Activated naive CD4-positive, alpha-beta T cell treated with anti-CD3 and anti-CD28 coated beads for 36 hours (primary cell): ENCODE measurements at regions of chr1 and their contacts with region 1.

Region 1: DNA sequence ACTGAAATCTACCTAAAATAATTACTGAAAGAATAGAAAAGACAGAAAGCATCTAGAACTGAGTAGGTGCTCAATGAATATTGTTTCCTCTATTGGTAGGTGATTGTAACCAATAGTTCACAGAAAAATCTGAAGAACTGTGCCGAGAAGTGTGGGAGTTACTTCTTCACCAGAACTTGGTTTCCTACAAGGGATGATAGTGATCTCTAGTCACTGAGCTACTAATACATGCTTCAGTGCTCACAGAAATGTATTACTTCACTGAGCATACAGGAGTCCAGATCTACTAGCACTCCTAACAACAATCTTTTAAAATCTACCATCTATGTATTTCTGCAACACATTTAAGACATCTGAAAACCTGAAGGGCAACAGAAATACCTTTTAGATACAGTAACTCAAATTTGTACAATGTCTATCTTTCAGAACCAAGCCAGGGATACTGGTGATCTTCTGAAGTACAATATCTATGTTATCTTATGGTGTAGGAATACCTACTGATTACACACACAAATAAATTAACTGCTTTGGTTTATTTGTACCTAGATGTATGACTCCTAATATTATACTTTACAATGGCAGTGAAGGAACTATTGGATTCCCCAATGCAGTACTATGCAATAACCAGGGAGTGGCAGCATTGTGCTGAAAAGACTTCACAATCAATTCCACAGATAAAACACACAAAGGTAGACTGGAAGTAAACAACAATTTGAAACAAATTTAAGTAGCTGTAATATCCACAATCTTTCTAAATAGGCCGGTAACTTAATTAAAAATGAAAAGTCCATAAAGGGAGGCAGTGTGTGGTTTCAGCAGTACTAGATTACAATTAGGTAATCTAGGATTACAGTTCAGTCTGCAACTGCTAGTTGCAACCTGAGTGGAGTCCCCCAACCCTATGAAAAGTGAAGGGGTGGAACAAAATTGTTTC is 243.0 kb downstream of the SLC45A1 start:
- DNase-seq: peak; percentile 53
- H3K4me3 Mint-ChIP-seq: no peak overlapping the region
- H3K27ac Mint-ChIP-seq: no peak overlapping the region
- H3K4me1 Mint-ChIP-seq: peaks cover 26% of the 10 kb centered on the region
- H3K27me3 Mint-ChIP-seq: no peaks in the 10 kb centered on the region

Region 2: DNA sequence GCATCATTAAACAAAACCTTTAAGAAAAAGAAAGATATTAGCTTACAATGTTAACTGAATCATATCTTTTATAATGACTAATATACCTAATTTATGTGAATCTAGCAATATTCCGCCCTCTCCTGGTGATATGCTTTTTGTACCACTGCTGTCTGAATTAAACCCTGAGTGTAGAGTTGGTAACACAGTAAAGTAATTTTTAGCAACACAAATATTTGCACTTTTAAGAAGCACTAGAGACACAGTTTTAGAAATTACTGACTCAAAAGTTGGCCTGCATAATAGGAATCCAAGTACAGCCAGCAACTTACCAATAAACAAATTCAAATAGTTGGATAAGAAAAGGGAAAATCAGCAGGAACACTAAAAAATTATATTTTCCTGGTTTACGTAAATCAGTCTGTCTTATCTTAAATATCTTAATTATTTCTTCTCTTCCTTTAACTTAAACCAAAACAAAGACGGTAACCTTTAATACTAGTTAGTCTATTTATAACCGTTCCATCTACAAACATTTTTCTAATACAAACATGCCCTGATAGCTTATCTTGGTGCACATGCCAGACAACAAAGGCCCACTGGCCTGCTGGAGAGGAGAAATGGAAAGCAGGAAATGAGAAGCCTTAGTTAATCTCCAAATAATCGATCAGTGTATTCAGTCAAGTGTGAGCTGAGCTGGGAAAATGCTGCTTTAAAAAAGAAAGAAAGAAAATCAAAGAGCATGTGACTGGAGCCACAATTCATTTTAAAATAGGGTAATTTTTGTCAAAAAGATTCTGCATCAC is 10.5 kb after region 1 on chr1:
- CTCF ChIA-PET with region 1: interaction called, 15 read pairs
- intact Hi-C with region 1: no loop called
- DNase-seq: no peak
- H3K4me3 Mint-ChIP-seq: no peak overlapping the region
- H3K27ac Mint-ChIP-seq: no peak overlapping the region
- H3K4me1 Mint-ChIP-seq: no peaks in the 10 kb centered on the region
- H3K27me3 Mint-ChIP-seq: no peaks in the 10 kb centered on the region

Region 3: DNA sequence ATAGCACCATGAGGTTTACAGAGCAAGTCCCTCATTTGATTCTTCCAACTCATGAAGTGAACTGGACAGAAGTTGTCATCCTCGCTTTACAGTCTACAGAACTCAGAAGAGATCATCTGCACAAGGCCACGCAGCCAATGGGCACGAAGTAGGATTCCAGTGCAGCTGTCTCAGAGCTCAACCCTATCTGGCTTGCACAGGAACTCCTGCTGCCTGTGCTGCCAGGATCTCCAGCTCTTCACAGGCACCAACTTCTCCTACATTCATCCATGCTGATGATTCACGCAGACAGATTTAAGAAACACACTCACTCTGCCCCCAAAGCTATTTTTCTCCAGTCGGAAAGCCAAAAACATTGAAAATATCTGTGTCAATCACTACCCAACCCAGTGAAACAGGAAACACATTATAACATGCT is 99.5 kb after region 1 on chr1:
- CTCF ChIA-PET with region 1: interaction called, 13 read pairs
- intact Hi-C with region 1: no loop called
- DNase-seq: no peak
- H3K4me3 Mint-ChIP-seq: no peak overlapping the region
- H3K27ac Mint-ChIP-seq: no peak overlapping the region
- H3K4me1 Mint-ChIP-seq: peaks cover 9% of the 10 kb centered on the region
- H3K27me3 Mint-ChIP-seq: no peaks in the 10 kb centered on the region

Region 4: DNA sequence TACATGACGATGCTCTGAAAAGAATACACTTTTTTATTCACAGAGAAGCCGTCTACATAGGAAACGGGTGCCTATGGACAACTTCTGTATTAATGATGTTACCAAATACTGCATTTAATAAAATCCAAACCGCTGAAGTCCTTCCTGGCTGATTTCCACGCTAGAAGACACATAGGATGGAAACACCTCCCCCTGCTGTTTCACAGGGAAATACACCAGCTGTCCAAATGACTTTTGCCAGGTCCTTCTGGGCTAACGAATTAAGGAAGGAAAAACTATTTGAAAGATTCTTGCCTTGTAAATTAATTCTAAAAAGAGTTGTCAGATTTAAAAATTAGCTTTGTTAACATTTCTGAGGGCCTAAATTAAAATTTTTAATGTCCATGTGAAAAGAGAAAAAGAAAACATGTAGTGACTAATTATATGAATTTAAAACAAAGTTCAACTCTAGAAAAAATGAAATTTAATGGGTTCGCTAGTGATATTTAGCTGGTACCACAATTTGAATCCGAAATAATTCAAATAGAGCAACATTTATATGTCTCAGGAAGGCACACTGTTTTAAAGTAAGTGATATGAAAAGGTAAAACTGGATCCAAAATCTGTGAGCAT is 110.5 kb after region 1 on chr1:
- CTCF ChIA-PET with region 1: interaction called, 32 read pairs
- intact Hi-C with region 1: loop called (anchors 1 kb)
- DNase-seq: peak; percentile 43
- H3K4me3 Mint-ChIP-seq: no peak overlapping the region
- H3K27ac Mint-ChIP-seq: no peak overlapping the region
- H3K4me1 Mint-ChIP-seq: peaks cover 52% of the 10 kb centered on the region
- H3K27me3 Mint-ChIP-seq: no peaks in the 10 kb centered on the region

Region 5: GRCh38 chr1:8718850-8719361 is 158.0 kb after region 1 on chr1:
- CTCF ChIA-PET with region 1: interaction called, 16 read pairs
- intact Hi-C with region 1: no loop called
- DNase-seq: peak; percentile 25
- H3K4me3 Mint-ChIP-seq: no peak overlapping the region
- H3K27ac Mint-ChIP-seq: no peak overlapping the region
- H3K4me1 Mint-ChIP-seq: peaks cover 17% of the 10 kb centered on the region
- H3K27me3 Mint-ChIP-seq: no peaks in the 10 kb centered on the region

Region 6: GRCh38 chr1:8727809-8728213 is 166.9 kb after region 1 on chr1:
- CTCF ChIA-PET with region 1: interaction called, 21 read pairs
- intact Hi-C with region 1: loop called (anchors 1 kb)
- DNase-seq: no peak
- H3K4me3 Mint-ChIP-seq: no peak overlapping the region
- H3K27ac Mint-ChIP-seq: no peak overlapping the region
- H3K4me1 Mint-ChIP-seq: peaks cover 15% of the 10 kb centered on the region
- H3K27me3 Mint-ChIP-seq: no peaks in the 10 kb centered on the region

Region 7: DNA sequence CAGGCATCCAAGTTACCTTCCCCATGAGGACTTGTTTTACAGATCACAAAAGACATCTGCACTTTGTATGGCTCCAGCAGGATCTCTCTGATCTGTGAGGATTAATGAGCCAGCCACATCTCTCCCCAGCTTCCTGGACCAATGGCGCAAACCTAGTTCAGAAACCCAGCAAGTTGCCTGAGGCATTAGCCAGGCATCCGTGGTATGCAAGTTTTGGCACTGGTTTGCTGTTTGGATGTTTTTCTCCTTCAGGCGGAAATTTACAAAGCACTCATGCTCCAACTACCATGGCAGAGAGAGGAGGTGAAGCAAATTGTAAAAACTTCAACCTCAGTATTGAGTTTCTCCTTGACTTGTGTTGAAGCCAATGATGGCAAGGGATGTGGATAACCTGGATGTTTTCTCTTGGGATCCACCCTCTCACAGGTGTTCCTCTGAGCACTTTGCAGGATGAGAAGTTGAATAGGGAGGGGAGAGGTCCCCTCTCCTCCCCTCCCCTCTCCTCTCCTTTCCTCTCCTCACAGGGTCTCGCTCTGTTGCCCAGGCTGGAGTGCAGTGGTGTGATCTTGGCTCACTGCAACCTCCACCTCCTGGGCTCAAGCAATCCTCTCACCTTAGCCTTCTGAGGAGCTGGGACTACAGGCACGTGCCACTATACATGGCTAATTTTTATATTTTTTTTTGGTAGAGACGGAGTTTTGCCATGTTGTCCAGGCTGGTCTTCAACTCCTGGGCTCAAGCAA is 343.2 kb after region 1 on chr1:
- CTCF ChIA-PET with region 1: no interaction called
- intact Hi-C with region 1: loop called (anchors 5 kb)
- DNase-seq: no peak
- H3K4me3 Mint-ChIP-seq: no peak overlapping the region
- H3K27ac Mint-ChIP-seq: no peak overlapping the region
- H3K4me1 Mint-ChIP-seq: peaks cover 48% of the 10 kb centered on the region
- H3K27me3 Mint-ChIP-seq: no peaks in the 10 kb centered on the region

Region 8: GRCh38 chr1:8955406-8955805 is 394.5 kb after region 1 on chr1:
- CTCF ChIA-PET with region 1: no interaction called
- intact Hi-C with region 1: no loop called
- DNase-seq: no peak
- H3K4me3 Mint-ChIP-seq: no peak overlapping the region
- H3K27ac Mint-ChIP-seq: no peak overlapping the region
- H3K4me1 Mint-ChIP-seq: peaks cover 44% of the 10 kb centered on the region
- H3K27me3 Mint-ChIP-seq: no peaks in the 10 kb centered on the region